Naive thymus-derived CD4-positive, alpha-beta T cell (primary cell): ENCODE measurements at regions of chrX and their contacts with region 1.

Region 1: DNA sequence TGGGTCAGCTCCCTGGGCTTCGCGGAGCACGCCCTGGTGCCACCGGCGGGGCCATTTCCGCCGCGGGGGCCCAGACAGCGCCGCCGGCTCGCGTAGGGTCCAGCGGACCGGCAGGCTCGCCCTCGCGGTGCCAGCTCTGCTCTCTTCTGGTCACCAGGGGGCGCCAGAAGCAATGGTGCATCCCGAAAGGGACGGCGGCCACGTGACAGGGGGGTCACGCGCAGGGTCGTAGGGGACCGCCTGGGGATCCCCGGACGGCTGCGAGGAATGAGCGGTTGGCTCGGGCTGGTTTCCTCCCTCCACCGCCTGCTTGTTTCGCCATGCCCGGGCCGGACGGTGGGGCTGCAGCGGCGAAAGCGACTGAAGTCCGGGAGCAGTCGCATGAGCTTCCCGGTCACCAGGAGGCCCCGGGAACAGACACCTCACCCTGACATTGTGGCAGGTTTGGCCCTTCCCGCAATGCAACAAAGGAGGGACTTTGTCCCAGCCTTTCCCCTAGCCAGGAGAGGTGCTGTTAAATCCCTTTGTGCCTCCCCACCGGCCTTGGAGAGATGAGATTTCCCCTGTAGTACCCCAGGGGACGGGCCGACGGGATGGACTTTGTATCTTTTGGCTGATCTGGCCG is 15.8 kb downstream of the ZCCHC12 start:
- DNase-seq: peak in 7 of 9 donors; percentile 15 to 70 (median 26)
- ATAC-seq: peak; percentile 72
- H3K4me3 ChIP-seq: no peak overlapping the region
- H3K4me3 Mint-ChIP-seq: peak overlapping the region in 9 of 10 donors; percentile 21 to 65 (median 45)
- H3K27ac ChIP-seq: no peak overlapping the region
- H3K27ac Mint-ChIP-seq: no peak overlapping the region
- H3K4me1 ChIP-seq: no peaks in the 10 kb centered on the region
- H3K4me1 Mint-ChIP-seq: peaks cover 0 to 4% (median 0%) of the 10 kb centered on the region in 7 donors
- H3K27me3 ChIP-seq: no peaks in the 10 kb centered on the region
- H3K27me3 Mint-ChIP-seq: peaks cover 0 to 27% (median 12%) of the 10 kb centered on the region in 5 donors

Region 2: GRCh38 chrX:119067023-119067739 is 227.7 kb after region 1 on chrX:
- CTCF ChIA-PET with region 1: interaction called, 6 read pairs
- POLR2A ChIA-PET with region 1: no interaction called
- intact Hi-C with region 1: loop called in 1 of 2 experiments (anchors 2 kb)
- DNase-seq: peak in 4 of 9 donors; percentile 2 to 19 (median 13)
- ATAC-seq: peak; percentile 80
- H3K4me3 ChIP-seq: no peak overlapping the region
- H3K4me3 Mint-ChIP-seq: no peak overlapping the region
- H3K27ac ChIP-seq: no peak overlapping the region
- H3K27ac Mint-ChIP-seq: no peak overlapping the region
- H3K4me1 ChIP-seq: no peaks in the 10 kb centered on the region
- H3K4me1 Mint-ChIP-seq: peaks cover 0 to 2% (median 0%) of the 10 kb centered on the region in 7 donors
- H3K27me3 ChIP-seq: no peaks in the 10 kb centered on the region
- H3K27me3 Mint-ChIP-seq: peaks cover 0 to 3% (median 0%) of the 10 kb centered on the region in 5 donors

Region 3: DNA sequence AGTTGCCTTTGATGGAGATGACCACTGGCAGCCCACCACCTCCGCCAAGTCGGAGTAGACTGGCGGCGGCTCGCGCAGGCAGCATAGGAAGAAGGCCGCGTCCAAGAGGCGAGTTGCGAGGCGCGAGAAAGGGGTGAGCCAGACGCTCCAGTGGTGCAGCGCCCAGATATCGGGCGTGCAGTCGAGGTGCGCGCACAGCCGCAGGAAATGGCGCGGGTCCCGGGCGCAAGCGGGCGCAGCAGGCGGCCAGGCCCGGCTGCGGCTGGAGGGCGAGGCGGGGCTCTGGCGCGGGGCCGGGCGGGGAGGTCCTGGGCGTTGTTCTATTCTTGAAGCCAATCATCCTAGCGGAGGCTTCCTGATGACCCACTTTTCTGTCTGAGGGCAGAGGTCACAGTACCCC is 383.5 kb after region 1 on chrX:
- CTCF ChIA-PET with region 1: no interaction called
- POLR2A ChIA-PET with region 1: no interaction called
- intact Hi-C with region 1: loop called in 1 of 2 experiments (anchors 2 kb)
- DNase-seq: no peak
- ATAC-seq: no peak
- H3K4me3 ChIP-seq: no peak overlapping the region
- H3K4me3 Mint-ChIP-seq: no peak overlapping the region
- H3K27ac ChIP-seq: no peak overlapping the region
- H3K27ac Mint-ChIP-seq: no peak overlapping the region
- H3K4me1 ChIP-seq: no peaks in the 10 kb centered on the region
- H3K4me1 Mint-ChIP-seq: peaks cover 0 to 5% (median 0%) of the 10 kb centered on the region in 7 donors
- H3K27me3 ChIP-seq: no peaks in the 10 kb centered on the region
- H3K27me3 Mint-ChIP-seq: peaks cover 0 to 34% (median 19%) of the 10 kb centered on the region in 5 donors

Region 4: DNA sequence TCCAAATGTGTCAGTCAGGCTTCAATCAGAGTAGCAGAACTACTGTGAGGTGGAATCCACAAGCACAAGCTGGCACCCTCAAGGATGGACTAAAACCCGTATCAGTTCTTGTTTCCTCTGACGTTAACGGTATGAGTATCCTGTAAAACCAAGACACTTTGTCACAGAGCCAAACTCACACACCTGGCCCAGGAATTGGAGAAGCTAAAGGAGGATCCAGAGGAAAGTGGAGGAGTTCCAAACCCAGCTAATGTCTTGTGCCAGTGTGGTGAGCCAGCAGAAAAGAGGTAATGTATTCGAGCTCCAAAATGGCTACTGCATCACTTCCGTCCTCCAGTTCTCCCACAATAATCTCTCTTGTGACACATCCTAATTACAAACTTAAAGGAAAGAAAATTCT is 1567.2 kb after region 1 on chrX:
- CTCF ChIA-PET with region 1: no interaction called
- POLR2A ChIA-PET with region 1: no interaction called
- intact Hi-C with region 1: no loop called
- DNase-seq: no peak
- ATAC-seq: no peak
- H3K4me3 ChIP-seq: no peak overlapping the region
- H3K4me3 Mint-ChIP-seq: no peak overlapping the region
- H3K27ac ChIP-seq: no peak overlapping the region
- H3K27ac Mint-ChIP-seq: no peak overlapping the region
- H3K4me1 ChIP-seq: no peaks in the 10 kb centered on the region
- H3K4me1 Mint-ChIP-seq: no peaks in the 10 kb centered on the region
- H3K27me3 ChIP-seq: no peaks in the 10 kb centered on the region
- H3K27me3 Mint-ChIP-seq: peaks cover 0 to 2% (median 0%) of the 10 kb centered on the region in 5 donors